PC-3 (cell line): ENCODE measurements at regions of chr2 and their contacts with region 1.

Region 1: GRCh38 chr2:70964596-70965386 is 13.6 kb upstream of the ANKRD53 start:
- DNase-seq: no peak
- ATAC-seq: no peak
- H3K4me3 ChIP-seq: no peak overlapping the region
- H3K27ac ChIP-seq: no peak overlapping the region
- H3K4me1 ChIP-seq: no peaks in the 10 kb centered on the region
- H3K27me3 ChIP-seq: no peaks in the 10 kb centered on the region
- CTCF ChIP-seq: peak; percentile 35

Region 2: GRCh38 chr2:70886541-70886987 is 78.2 kb before region 1 on chr2:
- CTCF ChIA-PET with region 1: no interaction called
- POLR2A ChIA-PET with region 1: no interaction called
- intact Hi-C with region 1: no loop called
- DNase-seq: no peak
- ATAC-seq: no peak
- H3K4me3 ChIP-seq: no peak overlapping the region
- H3K27ac ChIP-seq: no peak overlapping the region
- H3K4me1 ChIP-seq: no peaks in the 10 kb centered on the region
- H3K27me3 ChIP-seq: peaks cover 38% of the 10 kb centered on the region
- CTCF ChIP-seq: no peak

Region 3: DNA sequence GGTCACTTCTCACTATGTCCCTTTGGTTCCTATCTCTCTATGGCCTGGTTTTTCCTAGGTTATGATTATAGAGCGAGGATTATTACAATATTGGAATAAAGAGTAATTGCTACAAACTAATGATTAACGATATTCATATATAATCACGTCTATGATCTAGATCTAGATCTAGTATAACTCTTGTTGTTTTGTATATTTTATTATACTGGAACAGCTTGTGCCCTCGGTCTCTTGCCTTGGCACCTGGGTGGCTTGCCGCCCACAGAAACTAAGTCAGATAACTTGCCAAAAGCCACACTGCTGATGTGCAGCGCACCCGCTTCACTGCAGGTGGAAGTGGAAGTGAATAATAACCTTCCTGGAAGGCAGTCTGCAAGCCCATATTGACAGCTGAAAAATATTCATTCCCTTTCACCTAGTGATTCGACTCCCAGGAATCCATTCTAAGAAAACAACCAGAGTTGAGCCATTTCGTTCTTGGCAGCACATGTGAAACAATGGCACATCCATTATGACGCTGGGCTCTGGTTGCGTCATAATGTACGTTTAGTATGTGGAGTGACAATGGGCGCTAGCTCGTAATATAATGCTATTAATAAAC is 12.9 kb after region 1 on chr2:
- CTCF ChIA-PET with region 1: interaction called, 14 read pairs
- POLR2A ChIA-PET with region 1: no interaction called
- intact Hi-C with region 1: no loop called
- DNase-seq: peak; percentile 57
- ATAC-seq: peak; percentile 54; the same call in 1 of the 2 replicates
- H3K4me3 ChIP-seq: peak overlapping the region; percentile 70
- H3K27ac ChIP-seq: no peak overlapping the region
- H3K4me1 ChIP-seq: peaks cover 16% of the 10 kb centered on the region
- H3K27me3 ChIP-seq: no peaks in the 10 kb centered on the region
- CTCF ChIP-seq: peak; percentile 39

Region 4: GRCh38 chr2:71120213-71120612 is 155.4 kb after region 1 on chr2:
- CTCF ChIA-PET with region 1: no interaction called
- POLR2A ChIA-PET with region 1: no interaction called
- intact Hi-C with region 1: no loop called
- DNase-seq: no peak
- ATAC-seq: no peak
- H3K4me3 ChIP-seq: no peak overlapping the region
- H3K27ac ChIP-seq: no peak overlapping the region
- H3K4me1 ChIP-seq: peaks cover 10% of the 10 kb centered on the region
- H3K27me3 ChIP-seq: no peaks in the 10 kb centered on the region
- CTCF ChIP-seq: no peak